Posterior cingulate gyrus (tissue), 11 donors: ENCODE measurements at regions of chr7 and their contacts with region 1.

Region 1: DNA sequence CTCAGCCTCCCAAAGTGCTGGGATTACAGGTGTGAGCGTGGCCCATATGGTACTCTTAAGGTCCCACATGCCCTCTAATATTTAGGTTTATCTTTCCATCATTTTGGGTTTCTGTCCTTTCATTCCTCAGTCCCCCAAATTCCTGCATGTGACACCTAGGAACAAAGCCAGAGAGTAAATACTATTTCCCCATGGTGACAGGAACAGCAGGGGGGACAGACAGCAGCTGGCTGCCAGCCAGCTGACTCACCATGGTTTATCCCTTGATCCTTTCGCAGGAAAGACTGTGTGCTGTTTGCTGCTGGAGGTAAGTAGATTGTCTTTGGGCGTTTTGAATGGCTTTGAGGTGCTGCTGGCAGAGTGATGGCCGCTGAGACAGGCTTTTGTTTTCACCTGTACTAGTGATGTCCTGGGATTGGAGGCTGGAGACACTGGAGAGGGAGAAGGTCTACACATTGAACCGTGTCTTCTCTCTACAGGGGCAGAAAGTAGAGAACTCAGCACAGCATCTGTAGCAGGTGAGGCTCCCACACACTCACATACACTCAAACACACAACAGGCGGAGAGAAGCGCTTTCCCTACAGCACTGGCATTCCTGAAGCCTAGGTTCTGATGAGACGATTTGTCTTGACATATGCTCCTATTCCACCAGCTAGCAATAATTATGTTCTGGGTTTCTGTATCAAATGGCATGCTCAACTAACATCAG is 83.7 kb upstream of the EFCAB10 start:
- DNase-seq: no peak

Region 2: GRCh38 chr7:105699568-105700236 is 34.7 kb after region 1 on chr7:
- intact Hi-C with region 1: loop called (anchors 2 kb)
- DNase-seq: no peak